Psoas muscle (tissue), 8 donors: ENCODE measurements at regions of chr6 and their contacts with region 1.

Region 1: DNA sequence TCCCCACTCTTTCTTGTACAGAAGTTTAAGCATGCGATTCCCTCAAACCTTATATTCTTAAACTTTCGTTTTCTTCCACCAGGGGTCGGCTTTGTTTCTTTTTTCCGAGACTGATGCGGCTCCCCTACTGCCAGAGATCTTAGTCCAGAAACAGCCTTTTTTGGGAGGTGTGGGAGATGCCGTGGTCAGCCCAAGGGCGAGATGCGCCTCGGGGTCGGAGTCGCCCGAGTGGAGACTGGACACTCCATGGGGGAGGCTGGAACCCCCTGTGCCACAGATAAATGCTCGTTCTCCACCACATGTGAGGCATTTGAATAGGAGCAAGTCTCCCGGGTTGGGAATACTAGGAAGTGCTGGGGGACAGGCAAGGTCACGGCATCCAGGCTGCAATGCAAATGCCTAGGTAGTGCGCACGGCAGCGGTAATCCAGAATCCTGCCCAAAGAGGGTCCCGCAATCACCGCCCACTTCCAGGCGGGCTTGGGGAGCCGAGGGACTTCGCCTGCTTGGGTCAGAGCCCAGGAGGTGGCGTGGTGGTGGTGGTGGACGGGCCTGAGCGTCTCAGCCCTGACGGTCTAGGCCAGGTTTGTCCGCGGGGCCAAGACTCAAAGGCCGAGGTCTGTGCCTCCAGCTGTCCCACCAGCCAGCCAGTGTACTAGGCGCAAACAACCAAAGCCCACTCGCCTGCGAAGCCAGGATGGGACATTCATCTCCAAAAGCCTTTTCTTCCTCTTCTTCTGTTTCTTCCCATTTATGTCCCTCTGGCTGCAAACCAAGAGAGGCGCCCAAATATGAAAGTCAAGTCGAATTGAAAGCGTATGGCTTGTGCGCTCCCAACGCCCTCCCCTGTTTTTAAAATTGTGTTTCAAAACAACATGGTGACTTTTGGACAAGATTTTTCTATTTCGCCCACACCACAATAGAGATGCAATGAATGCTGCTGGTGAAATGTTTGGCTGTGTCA is 39.3 kb upstream of the OSTM1 start:
- DNase-seq: peak in 1 of 2 donors; percentile 54
- ATAC-seq: peak in 2 of 4 donors; percentile 14 to 49
- H3K4me3 ChIP-seq: peak overlapping the region; percentile 32
- H3K27ac ChIP-seq: no peak overlapping the region
- H3K4me1 ChIP-seq: peaks cover 16% of the 10 kb centered on the region
- H3K27me3 ChIP-seq: peaks cover 0 to 84% (median 39%) of the 10 kb centered on the region in 3 donors
- CTCF ChIP-seq: peak; percentile 45

Region 2: DNA sequence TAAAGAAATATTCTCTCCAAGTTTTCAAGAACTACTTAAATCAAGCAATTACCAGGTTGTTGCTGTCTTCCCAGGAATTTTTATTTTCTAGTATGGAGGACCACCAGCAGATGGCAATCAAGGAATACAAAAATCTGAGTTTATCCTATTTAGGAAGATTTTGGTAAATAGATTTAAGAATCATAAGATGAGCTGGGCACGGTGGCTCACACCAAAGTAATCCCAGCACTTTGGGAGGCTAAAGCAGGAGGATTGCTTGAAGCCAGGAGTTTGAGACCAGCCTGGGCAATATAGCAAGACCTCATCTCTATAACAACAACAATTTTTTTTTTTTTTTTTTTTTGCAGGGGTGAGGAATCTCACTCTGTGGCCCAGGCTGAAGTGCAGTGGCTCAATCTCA is 136.6 kb before region 1 on chr6:
- intact Hi-C with region 1: no loop called
- DNase-seq: no peak
- ATAC-seq: no peak
- H3K4me3 ChIP-seq: no peak overlapping the region
- H3K27ac ChIP-seq: no peak overlapping the region
- H3K4me1 ChIP-seq: no peaks in the 10 kb centered on the region
- H3K27me3 ChIP-seq: no peaks in the 10 kb centered on the region
- CTCF ChIP-seq: peak; percentile 33

Region 3: GRCh38 chr6:108168501-108169463 is 54.9 kb after region 1 on chr6:
- intact Hi-C with region 1: loop called (anchors 5 kb)
- DNase-seq: peak in 1 of 2 donors; percentile 42
- ATAC-seq: peak; percentile 74 to 84 (median 77)
- H3K4me3 ChIP-seq: peak overlapping the region; percentile 52
- H3K27ac ChIP-seq: no peak overlapping the region
- H3K4me1 ChIP-seq: peaks cover 38% of the 10 kb centered on the region
- H3K27me3 ChIP-seq: peaks cover 0 to 100% (median 73%) of the 10 kb centered on the region in 3 donors
- CTCF ChIP-seq: peak; percentile 35

Region 4: GRCh38 chr6:108203189-108204112 is 89.6 kb after region 1 on chr6:
- intact Hi-C with region 1: no loop called
- DNase-seq: no peak
- ATAC-seq: peak; percentile 59 to 76 (median 73)
- H3K4me3 ChIP-seq: no peak overlapping the region
- H3K27ac ChIP-seq: peak overlapping the region; percentile 15
- H3K4me1 ChIP-seq: peaks cover 3% of the 10 kb centered on the region
- H3K27me3 ChIP-seq: no peaks in the 10 kb centered on the region
- CTCF ChIP-seq: no peak

Region 5: GRCh38 chr6:108492131-108492766 is 378.4 kb after region 1 on chr6:
- intact Hi-C with region 1: loop called (anchors 5 to 10 kb)
- DNase-seq: no peak
- ATAC-seq: peak; percentile 64 to 85 (median 66)
- H3K4me3 ChIP-seq: no peak overlapping the region
- H3K27ac ChIP-seq: no peak overlapping the region
- H3K4me1 ChIP-seq: no peaks in the 10 kb centered on the region
- H3K27me3 ChIP-seq: no peaks in the 10 kb centered on the region
- CTCF ChIP-seq: peak; percentile 57

Region 6: DNA sequence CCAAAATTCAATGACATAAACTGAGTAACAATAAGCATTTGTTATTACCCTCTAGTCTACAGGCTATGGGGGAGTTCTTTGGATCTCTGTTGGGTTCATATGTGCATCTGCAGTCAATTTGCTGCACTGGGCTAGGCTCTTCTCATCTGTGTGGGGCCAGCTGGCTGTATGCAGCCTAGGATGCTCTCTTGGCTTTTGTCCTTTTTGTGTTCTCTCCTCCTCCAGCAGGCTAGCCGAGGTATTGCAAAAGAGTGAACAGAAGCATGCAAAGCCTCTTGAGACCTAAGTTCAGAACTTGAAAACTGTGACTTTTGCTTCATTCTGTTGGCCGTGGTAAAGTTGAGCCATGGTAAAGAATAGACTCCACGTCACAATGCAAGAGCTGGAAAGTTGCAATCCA is 384.0 kb after region 1 on chr6:
- intact Hi-C with region 1: loop called (anchors 5 to 10 kb)
- DNase-seq: no peak
- ATAC-seq: peak in 2 of 4 donors; percentile 33 to 34
- H3K4me3 ChIP-seq: no peak overlapping the region
- H3K27ac ChIP-seq: no peak overlapping the region
- H3K4me1 ChIP-seq: no peaks in the 10 kb centered on the region
- H3K27me3 ChIP-seq: no peaks in the 10 kb centered on the region
- CTCF ChIP-seq: no peak

Region 7: GRCh38 chr6:108526739-108527174 is 412.9 kb after region 1 on chr6:
- intact Hi-C with region 1: loop called (anchors 2 to 10 kb)
- DNase-seq: no peak
- ATAC-seq: peak in 2 of 4 donors; percentile 58 to 75
- H3K4me3 ChIP-seq: no peak overlapping the region
- H3K27ac ChIP-seq: no peak overlapping the region
- H3K4me1 ChIP-seq: no peaks in the 10 kb centered on the region
- H3K27me3 ChIP-seq: no peaks in the 10 kb centered on the region
- CTCF ChIP-seq: peak; percentile 79

Region 8: DNA sequence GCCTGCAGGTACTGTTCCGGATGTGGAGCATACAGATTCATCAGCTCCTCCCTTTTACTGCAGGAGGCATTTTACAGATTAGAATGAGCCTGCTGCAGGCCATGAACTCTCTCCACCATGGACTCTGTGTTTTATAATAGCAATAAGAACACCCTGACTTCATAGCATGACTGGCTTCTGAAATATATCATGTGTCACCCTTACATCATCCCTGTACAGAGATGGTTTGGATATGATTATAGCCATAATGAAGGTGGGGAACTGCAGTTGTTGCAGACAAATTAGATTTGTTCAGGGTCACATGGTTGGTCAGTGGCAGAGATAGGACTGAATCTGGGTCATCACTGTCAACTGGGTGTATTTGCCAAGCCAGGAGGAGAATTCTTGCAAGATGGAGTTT is 547.6 kb after region 1 on chr6:
- intact Hi-C with region 1: no loop called
- DNase-seq: no peak
- ATAC-seq: peak; percentile 87 to 91 (median 88)
- H3K4me3 ChIP-seq: no peak overlapping the region
- H3K27ac ChIP-seq: peak overlapping the region; percentile 84
- H3K4me1 ChIP-seq: peaks cover 77% of the 10 kb centered on the region
- H3K27me3 ChIP-seq: no peaks in the 10 kb centered on the region
- CTCF ChIP-seq: no peak